Dorsolateral prefrontal cortex (tissue), 120 donors: ENCODE measurements at regions of chr2 and their contacts with region 1.

Region 1: GRCh38 chr2:54838585-54839035 is 115.1 kb downstream of the EML6 start:
- DNase-seq: peak in 9 of 10 donors; percentile 28 to 80 (median 65)
- H3K4me3 ChIP-seq: peak overlapping the region in 1 of 59 donors; percentile 14
- H3K27ac ChIP-seq: peak overlapping the region in 46 of 59 donors; percentile 2 to 81 (median 50)
- H3K27me3 ChIP-seq: no peaks in the 10 kb centered on the region
- CTCF ChIP-seq: peak; percentile 75 to 97 (median 92)

Region 2: DNA sequence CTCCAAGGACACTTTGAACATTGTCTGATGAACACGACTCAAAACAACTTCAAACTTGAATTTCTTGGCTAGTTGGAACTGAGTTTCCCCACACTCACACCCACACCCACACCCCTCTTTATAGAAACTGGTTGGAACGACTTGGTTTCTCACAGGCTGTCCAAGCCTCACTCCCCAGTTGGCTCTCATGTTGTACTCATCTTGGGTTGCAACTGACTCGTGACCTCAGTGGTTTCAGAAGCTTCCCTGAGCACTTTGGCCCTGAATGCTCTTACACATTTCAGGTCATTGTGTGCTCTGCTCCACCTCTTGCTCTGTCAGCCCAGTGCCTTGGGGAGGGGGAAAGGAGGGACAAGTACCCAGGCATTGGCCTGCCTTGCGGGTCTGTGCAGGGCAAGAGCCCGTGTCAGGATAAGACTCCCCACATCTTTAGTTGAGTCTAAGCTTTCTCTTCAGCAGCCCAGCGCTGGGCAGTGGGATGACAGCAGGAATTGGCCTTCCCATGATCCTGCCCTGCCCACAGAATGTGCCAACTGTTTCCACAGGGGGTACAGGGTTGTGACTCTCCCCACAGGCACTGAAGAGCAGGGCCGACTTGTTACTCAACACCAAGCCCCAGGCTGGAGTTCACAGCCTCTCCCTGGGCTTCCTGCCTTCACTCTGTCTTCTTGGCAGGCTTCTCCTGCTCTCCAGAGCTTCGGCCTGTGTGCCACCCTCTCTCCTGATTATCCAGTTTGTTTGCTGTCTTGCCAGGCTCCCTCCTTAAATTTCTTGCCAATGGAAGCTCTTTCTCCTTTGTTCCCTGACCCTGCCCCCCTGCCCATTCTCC is 107.0 kb after region 1 on chr2:
- intact Hi-C with region 1: no loop called
- DNase-seq: peak in 5 of 10 donors; percentile 32 to 78 (median 63)
- H3K4me3 ChIP-seq: peak overlapping the region in 6 of 59 donors; percentile 5 to 60 (median 24)
- H3K27ac ChIP-seq: peak overlapping the region; percentile 20 to 93 (median 83)
- H3K27me3 ChIP-seq: no peaks in the 10 kb centered on the region
- CTCF ChIP-seq: no peak

Region 3: GRCh38 chr2:55175254-55176025 is 336.8 kb after region 1 on chr2:
- intact Hi-C with region 1: loop called in 1 of 2 experiments (anchors 5 kb)
- DNase-seq: no peak
- H3K4me3 ChIP-seq: peak overlapping the region in 41 of 59 donors; percentile 1 to 50 (median 26)
- H3K27ac ChIP-seq: peak overlapping the region in 10 of 59 donors; percentile 2 to 49 (median 21)
- H3K27me3 ChIP-seq: no peaks in the 10 kb centered on the region
- CTCF ChIP-seq: peak; percentile 44 to 92 (median 73)